GM13976 (cell line): ENCODE measurements at regions of chr21 and their contacts with region 1.

Region 1: DNA sequence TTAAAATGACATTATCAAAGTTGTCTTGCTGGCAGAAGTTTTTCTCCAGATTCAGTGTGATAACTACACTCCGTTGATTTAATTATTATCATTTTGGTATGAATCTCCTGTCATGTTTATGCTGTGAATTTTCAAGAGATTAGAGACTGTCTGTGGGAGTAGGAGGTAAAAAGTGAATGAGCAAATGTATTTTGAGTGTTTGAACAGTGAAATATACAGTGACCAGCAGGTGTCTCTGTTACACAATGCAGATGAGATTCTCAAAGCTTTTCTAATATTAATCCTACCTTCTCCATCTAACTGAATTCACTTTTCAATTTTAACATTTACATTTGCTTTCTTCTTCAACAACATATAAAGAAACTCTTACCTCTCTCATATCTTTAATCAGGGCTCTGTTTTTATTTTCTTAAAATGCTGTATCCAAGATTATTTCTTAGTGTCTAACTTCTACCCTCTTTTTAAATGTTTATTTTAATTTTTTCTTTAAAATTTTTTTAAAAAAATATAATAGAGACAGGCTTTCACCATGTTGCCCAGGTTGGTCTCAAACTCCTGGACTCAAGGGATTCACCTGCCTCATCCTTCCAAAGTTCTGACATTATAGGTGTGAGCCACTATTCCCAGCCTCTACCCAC is 20.9 kb upstream of the HSPA13 start:
- DNase-seq: peak; percentile 28
- CTCF ChIP-seq: peak; percentile 50

Region 2: GRCh38 chr21:15483138-15483780 is 1079.5 kb after region 1 on chr21:
- in situ Hi-C with region 1: loop called (anchors 25 kb)
- DNase-seq: peak; percentile 55
- CTCF ChIP-seq: peak; percentile 81

Region 3: DNA sequence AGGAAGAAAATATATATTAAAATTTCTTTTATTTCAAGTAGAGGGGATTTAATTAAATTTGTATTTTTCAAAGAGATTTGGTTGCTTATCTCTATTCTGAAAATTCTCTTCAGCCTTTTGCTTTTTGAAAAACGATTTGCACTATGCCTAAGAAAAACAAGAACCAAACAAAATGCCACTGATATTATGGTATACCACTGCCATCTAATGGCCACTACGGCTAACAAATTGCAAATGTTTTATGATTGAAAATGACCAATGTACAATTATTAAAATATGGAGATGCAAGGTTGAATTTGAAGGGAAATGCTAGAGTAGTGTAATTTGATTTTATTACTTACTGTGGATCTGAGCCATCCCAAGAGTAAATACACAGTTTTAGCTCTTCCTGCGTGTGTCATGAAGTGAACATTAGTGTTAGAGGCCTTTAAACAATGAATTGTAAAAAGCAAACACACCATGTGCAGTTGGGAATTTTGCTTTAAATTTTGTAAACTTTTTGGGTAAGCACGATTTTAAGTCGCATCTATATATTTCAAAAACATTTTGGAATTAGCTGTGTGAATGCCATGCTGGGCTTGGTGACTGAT is 1188.6 kb after region 1 on chr21:
- in situ Hi-C with region 1: loop called (anchors 25 kb)
- DNase-seq: peak; percentile 36
- CTCF ChIP-seq: peak; percentile 37